ENCODE measurements at regions of chr19 and their contacts with region 1.

Region 1: DNA sequence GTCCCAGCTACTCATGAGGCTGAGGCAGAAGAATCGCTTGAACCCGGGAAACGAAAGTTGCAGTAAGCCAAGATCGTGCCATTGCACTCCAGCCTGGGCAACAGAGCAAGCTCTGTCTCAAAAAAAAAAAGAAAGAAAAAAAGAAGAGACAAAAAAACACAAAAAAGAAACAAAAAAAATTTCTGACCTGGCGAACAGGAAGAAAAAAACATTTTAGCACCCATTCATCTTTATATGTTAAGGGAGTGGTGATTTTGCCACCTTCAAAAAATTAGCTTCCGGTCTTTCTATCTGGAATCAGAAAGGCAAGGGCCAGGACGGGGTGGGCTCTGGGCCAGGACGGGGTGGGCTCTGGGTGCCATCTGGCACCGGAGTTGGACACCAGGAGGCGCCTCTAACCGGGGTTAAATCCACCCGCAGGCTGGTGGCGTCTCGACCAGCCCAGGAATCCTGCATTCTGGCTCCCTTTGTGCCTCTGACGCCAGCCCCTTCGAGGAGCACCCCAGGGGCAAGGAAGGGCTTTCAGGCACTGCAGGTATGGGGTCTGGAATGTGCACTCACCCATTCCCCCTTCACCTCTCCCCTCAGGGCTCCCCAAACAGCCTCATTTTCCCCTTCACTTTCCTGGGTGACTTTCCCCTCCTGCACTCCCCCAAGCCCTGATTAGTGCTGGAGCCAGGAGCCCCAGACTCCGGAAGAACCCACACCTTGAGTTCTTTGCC is 10.4 kb upstream of the ZSWIM4 start:
- DNase-seq: peak in 1 of 2 experiments; percentile 65
- ATAC-seq: peak; percentile 89 to 92
- H3K4me3 ChIP-seq: no peak overlapping the region
- H3K27ac ChIP-seq: peak overlapping the region; percentile 70 to 88
- H3K4me1 ChIP-seq: peaks cover 24% of the 10 kb centered on the region; the same call in 2 of the 3 replicates
- CTCF ChIP-seq: peak; percentile 58
- EP300 ChIP-seq: no peak
- POLR2A ChIP-seq: no peak
- RAD21 ChIP-seq: peak; percentile 71 to 82

Region 2: DNA sequence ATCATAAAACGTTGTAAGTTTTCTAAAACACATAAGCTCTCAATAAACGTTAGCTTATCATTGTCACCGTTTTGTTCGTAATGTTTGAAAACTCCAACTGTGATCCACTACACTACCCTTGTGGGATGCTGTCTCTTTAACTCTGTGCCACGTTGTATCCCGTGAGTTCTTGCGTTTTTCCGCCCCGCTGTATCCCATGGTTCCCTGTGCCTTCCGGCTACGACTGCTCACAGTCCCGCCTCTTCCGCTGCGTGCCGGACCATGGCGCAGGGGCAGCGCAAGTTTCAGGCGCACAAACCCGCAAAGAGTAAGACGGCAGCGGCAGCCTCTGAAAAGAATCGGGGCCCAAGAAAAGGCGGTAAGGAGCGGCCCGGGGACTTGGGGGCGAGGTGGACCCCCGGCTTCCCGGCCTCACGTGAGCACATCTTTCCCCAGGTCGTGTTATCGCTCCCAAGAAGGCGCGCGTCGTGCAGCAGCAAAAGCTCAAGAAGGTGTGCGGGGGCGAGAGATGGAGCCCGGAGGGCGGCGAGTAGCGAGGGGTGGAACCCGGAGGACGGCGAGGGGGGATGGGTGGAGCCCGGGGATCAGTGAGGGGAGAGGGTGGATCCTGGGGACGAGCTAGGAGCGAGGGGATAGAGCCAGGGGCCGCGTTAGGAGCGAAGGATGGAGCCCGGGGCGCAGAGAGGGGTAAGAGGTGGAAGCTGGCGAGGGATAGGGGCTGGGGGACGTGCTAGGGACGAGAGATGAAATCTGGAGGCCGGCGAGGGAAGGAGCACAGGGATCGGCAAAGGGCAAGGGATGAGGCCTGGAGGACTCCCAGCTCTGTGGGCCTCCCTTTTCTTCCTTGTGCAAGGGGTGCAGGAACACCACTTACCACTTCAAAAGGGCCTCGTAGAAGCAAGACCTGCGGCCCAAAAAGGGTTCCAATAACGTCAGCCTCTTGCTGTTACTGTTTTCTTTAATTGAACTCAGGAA is 10.4 kb before region 1 on chr19 and contains the start of gene C19orf53:
- CTCF ChIA-PET with region 1: interaction called, 15 read pairs
- POLR2A ChIA-PET with region 1: interaction called, 4 read pairs
- DNase-seq: peak; percentile 85 to 88
- ATAC-seq: peak; percentile 99 to 100
- H3K4me3 ChIP-seq: peak within 1 kb of the TSS; percentile 94
- H3K27ac ChIP-seq: peak within 1 kb of the TSS; percentile 91 to 98
- H3K4me1 ChIP-seq: peaks cover 10% of the 10 kb centered on the region; the same call in 2 of the 3 replicates
- CTCF ChIP-seq: no peak
- EP300 ChIP-seq: no peak
- POLR2A ChIP-seq: peak; percentile 57
- RAD21 ChIP-seq: no peak
- polyA plus RNA-seq, gene C19orf53: 105 and 131 TPM in 2 replicates